Activated T-helper 2 cell treated with anti-CD3 and anti-CD28 coated beads, Interferon-gamma antibody, Interleukin-2, Interleukin-4, amounts not matched to agents 10 μg/mL and 5 μg/mL and 100 μg/mL, durations not matched to agents 14 hours and 24 hours and 36 hours (primary cell): ENCODE measurements at regions of chr6 and their contacts with region 1.

Region 1: GRCh38 chr6:20599302-20600051 is 65.2 kb downstream of the CDKAL1 start:
- DNase-seq: no peak
- H3K4me3 Mint-ChIP-seq: no peak overlapping the region
- H3K27ac Mint-ChIP-seq: peak overlapping the region; percentile 57
- H3K4me1 Mint-ChIP-seq: peaks cover 9% of the 10 kb centered on the region
- H3K27me3 Mint-ChIP-seq: no peaks in the 10 kb centered on the region

Region 2: DNA sequence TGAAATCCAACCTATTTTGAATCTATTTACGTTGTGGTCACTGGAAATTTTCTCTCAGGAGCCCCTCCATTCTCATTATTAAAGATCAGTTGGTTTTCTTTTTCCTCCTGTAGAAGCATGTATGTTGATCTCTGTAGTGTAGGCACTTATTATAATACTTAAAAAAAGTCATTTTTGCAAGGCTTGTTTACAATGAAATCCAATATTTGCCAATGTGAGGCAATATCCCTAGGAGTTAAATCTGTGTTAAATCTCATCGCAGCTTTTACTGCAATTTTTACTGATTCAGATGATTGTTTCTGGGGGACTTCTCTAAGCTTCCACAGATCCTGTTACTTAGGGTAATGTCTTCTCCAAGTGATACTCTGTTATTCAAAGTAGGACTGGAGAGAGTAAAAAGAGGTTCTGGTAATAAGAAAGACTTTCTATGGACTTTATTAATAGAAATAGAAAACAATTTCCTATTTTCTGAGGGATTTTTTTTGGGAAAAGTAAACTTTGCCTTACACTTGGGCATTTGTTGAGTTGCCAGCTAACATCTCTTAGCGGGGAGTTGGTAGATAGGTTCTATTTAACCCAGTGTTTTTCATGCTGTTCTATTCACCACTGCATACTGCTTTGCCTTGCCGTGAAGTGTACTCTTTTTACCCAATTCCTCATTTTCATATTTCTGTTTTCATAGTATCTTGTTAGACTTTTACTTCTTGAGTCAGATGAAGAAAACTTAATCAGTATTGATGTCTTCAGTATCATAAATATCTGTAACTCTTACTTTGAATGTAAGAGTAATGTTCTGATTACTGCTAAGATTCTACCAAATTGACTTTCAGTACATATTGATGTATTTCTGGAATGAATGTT is 16.7 kb before region 1 on chr6:
- intact Hi-C with region 1: loop called (anchors 1 kb)
- DNase-seq: no peak
- H3K4me3 Mint-ChIP-seq: no peak overlapping the region
- H3K27ac Mint-ChIP-seq: no peak overlapping the region
- H3K4me1 Mint-ChIP-seq: peaks cover 36% of the 10 kb centered on the region
- H3K27me3 Mint-ChIP-seq: no peaks in the 10 kb centered on the region

Region 3: DNA sequence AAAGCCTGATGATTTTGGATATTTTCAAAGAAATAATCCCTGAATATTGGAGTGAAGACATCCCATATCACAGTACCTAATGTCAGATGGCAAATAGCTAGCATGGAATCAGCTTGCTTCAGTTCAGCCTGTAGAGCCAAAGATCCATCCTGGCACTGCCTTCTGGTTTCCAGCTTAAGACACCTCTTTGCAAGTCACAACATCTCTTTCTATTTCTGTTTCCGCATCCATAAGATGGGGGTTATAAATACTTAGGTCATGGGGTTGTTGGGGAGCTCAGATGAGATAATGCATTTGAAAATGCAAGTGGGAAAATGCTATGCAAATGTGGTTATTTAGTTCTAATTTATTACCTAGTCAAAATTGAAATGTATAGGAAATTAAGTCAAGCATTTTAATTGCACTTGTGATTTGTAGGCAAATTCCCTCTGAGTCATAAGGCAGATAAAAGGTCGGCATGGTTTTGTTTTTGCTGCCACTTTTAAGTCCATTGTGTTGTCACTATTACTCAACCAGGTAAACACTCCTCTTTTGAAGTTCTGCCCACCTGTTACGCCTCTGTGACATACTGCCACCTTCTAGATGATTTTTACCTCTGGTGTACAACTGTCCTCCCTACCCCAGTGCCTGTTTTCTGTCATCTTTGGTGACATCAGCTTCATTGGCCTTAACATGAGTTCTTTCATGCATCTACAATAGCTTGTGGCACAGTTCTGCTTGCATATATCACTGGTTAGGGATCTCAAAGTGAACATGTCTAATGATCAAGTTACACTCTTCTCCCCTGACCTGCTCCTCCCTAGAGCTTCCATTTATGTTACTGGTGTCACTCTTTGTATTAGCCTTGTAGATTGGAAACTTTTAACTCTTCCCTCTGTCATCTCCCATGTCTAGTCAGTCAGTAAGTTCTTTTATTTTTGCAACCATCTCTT is 31.4 kb after region 1 on chr6:
- intact Hi-C with region 1: loop called (anchors 5 kb)
- DNase-seq: no peak
- H3K4me3 Mint-ChIP-seq: no peak overlapping the region
- H3K27ac Mint-ChIP-seq: no peak overlapping the region
- H3K4me1 Mint-ChIP-seq: peaks cover 20% of the 10 kb centered on the region
- H3K27me3 Mint-ChIP-seq: no peaks in the 10 kb centered on the region

Region 4: GRCh38 chr6:20708367-20709124 is 109.1 kb after region 1 on chr6:
- intact Hi-C with region 1: loop called (anchors 5 kb)
- DNase-seq: no peak
- H3K4me3 Mint-ChIP-seq: no peak overlapping the region
- H3K27ac Mint-ChIP-seq: peak overlapping the region; percentile 38
- H3K4me1 Mint-ChIP-seq: peaks cover 62% of the 10 kb centered on the region
- H3K27me3 Mint-ChIP-seq: no peaks in the 10 kb centered on the region